HAP-1 (cell line): ENCODE measurements at regions of chr4 and their contacts with region 1.

Region 1: DNA sequence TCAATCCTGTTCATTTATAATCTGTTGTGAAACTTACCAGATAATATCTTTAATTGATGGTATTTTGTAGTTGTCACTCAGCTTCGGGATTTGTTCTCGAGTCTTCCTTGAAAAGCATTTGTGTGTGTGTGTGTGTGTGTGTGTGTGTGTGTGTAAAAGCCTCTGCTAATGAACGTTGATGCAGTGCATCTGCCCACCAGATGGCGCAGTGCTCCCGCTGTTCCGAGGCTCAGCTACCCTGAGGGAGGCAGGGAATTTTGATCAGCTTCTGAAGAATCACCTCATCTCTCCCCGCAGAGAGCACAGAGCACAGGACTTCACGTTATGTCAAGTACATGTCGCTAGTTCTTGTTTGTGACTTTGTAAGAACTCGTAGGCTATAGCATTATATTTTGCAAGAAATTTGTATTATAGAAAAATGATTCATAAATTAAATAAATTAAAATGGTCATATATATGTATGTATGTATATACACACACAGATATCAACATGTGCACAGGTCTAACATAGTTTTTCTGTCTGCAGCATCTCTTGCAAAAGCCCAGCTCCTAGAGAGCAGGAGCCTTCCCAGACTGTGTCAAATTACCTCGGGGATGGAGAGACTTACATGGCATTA is 316.7 kb upstream of the IGFBP7 start:
- DNase-seq: peak; percentile 63 to 83
- H3K4me3 ChIP-seq: no peak overlapping the region
- H3K4me1 ChIP-seq: no peaks in the 10 kb centered on the region; the same call in 1 of the 2 replicates
- H3K27me3 ChIP-seq: peaks cover 22% of the 10 kb centered on the region

Region 2: GRCh38 chr4:57163530-57164459 is 263.1 kb before region 1 on chr4:
- in situ Hi-C with region 1: loop called (anchors 10 kb)
- DNase-seq: peak; percentile 69 to 86
- H3K4me3 ChIP-seq: peak overlapping the region; percentile 34
- H3K4me1 ChIP-seq: peaks cover 3% of the 10 kb centered on the region; the same call in 1 of the 2 replicates
- H3K27me3 ChIP-seq: no peaks in the 10 kb centered on the region; the same call in 1 of the 2 replicates

Region 3: GRCh38 chr4:57249083-57249482 is 177.8 kb before region 1 on chr4:
- in situ Hi-C with region 1: no loop called
- DNase-seq: no peak
- H3K4me3 ChIP-seq: no peak overlapping the region
- H3K4me1 ChIP-seq: no peaks in the 10 kb centered on the region
- H3K27me3 ChIP-seq: no peaks in the 10 kb centered on the region